Cardiac septum (tissue), 1 donor: ENCODE measurements at regions of chr2 and their contacts with region 1.

Region 1: DNA sequence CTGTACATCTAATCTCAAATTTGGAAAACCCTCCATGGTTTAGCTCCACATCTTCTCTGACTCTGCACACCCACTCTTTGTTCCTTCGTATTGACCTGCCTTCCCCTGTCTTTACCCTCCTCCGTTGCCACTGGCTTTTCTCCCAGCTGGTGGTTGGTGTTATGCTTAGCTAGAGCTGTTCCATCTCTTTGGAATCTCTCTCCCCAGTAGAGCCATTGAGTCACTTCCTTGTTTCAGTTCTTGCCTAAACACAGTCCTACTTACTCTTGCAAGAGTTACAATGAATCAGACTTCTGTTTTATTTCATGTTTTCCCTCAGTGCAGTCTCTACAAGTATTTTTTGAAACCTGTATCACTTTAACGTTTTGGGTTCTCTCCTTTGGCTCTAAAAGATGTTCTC is 263.9 kb downstream of the LTBP1 start:
- DNase-seq: no peak

Region 2: GRCh38 chr2:33378556-33379210 is 168.1 kb after region 1 on chr2:
- intact Hi-C with region 1: loop called (anchors 5 kb)
- DNase-seq: no peak

Region 3: GRCh38 chr2:34031097-34031496 is 820.5 kb after region 1 on chr2:
- intact Hi-C with region 1: no loop called
- DNase-seq: no peak